ENCODE measurements at regions of chr14 and their contacts with region 1.

Region 1: DNA sequence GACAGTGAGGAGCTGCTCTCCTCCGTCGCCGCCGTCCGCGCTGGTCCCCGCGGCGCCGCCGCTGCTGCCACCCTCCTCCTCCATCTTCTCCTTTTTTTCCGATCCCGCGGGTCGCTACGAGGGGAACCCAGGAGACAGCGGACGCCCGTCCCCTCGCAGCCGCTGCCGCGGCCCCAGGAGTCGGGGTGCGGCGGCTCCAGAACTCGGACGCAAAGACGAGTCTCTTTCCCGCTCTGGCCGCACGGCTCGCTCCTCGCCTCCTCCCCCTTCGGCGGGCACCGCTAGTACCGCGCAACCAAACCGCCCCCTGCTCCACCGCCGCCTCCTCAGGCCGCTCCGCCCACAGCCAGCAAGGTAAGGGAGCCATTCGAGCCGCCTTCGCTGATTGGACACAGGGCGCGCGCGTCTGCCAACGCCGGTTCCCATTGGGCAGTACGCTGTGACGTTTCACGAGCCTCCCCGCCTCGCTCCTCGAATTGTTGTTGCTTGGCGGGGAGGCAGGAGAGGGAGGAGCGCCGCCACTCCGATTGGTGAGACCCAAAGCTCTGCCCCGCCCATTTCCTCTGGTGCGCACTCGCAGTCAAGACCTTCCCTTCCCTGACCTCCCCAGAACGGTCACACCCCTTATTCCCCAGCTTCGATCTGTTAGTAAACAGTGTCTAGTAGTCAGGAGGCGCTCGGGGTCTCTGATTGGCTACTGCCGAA is at the start of gene RPS6KA5:
- DNase-seq: peak; percentile 100
- ATAC-seq: peak; percentile 97 to 98 (median 98)
- H3K4me3 ChIP-seq: peak within 1 kb of the TSS; percentile 68 to 98 (median 94)
- H3K27ac ChIP-seq: peak within 1 kb of the TSS; percentile 84 to 99 (median 95)
- H3K4me1 ChIP-seq: peaks cover 0 to 32% (median 6%) of the 10 kb centered on the region in 12 donors
- H3K27me3 ChIP-seq: no peaks in the 10 kb centered on the region
- CTCF ChIP-seq: peak in 7 of 12 donors; percentile 3 to 37 (median 24)
- POLR2A ChIP-seq: peak in 1 of 2 donors; percentile 84
- total RNA-seq, gene RPS6KA5: 6.5 to 13.3 (median 8.7) TPM

Region 2: DNA sequence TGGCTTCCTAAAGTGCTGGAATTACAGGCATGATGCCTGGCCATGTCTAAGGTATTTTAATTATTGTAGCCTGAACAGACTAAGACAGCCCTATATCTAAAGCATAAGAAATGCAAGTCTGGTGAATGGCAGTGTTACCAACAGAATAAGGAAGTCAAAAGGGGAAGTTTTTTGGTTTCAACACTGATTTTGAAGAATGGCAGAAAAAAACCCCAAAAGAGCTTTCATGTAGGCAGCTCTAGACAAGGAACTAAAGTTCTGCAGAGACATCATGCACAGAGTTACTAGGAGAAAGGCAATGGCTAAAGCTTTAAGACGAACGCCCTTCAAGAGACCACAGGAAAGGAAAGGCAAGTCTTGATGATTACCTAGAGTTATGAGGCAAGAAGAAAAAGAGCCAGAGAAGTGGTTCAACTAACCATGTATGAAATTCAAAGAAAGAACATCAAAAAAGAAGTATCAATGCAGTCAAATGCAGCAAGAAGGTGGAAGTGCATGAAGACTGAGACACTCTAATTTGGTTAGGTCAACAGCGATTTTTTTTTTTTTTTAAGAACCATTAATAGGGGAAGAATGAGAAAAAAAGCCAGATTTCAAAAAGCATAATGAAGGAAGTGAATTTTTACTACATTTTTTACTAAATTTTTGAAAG is 50.9 kb before region 1 on chr14:
- intact Hi-C with region 1: no loop called
- DNase-seq: no peak
- ATAC-seq: peak in 3 of 4 donors; percentile 55 to 64 (median 61)
- H3K4me3 ChIP-seq: no peak overlapping the region
- H3K27ac ChIP-seq: peak overlapping the region in 2 of 12 donors; percentile 7 to 86
- H3K4me1 ChIP-seq: peaks cover 0 to 62% (median 0%) of the 10 kb centered on the region in 12 donors
- H3K27me3 ChIP-seq: no peaks in the 10 kb centered on the region
- CTCF ChIP-seq: no peak
- POLR2A ChIP-seq: no peak

Region 3: GRCh38 chr14:91164685-91165084 is 104.2 kb after region 1 on chr14:
- intact Hi-C with region 1: loop called in 1 of 10 experiments (anchors 5 kb)
- DNase-seq: peak in 4 of 5 donors; percentile 48 to 84 (median 72)
- ATAC-seq: peak; percentile 72 to 82 (median 80)
- H3K4me3 ChIP-seq: no peak overlapping the region
- H3K27ac ChIP-seq: peak overlapping the region in 9 of 12 donors; percentile 1 to 77 (median 53)
- H3K4me1 ChIP-seq: peaks cover 0 to 52% (median 11%) of the 10 kb centered on the region in 12 donors
- H3K27me3 ChIP-seq: no peaks in the 10 kb centered on the region
- CTCF ChIP-seq: no peak
- POLR2A ChIP-seq: no peak

Region 4: GRCh38 chr14:91170504-91171121 is 110.1 kb after region 1 on chr14:
- intact Hi-C with region 1: loop called (anchors 1 to 10 kb)
- DNase-seq: peak in 3 of 5 donors; percentile 23 to 61 (median 58)
- ATAC-seq: peak; percentile 20 to 44 (median 30)
- H3K4me3 ChIP-seq: no peak overlapping the region
- H3K27ac ChIP-seq: peak overlapping the region; percentile 22 to 79 (median 60)
- H3K4me1 ChIP-seq: peaks cover 0 to 55% (median 19%) of the 10 kb centered on the region in 12 donors
- H3K27me3 ChIP-seq: no peaks in the 10 kb centered on the region
- CTCF ChIP-seq: no peak
- POLR2A ChIP-seq: no peak

Region 5: GRCh38 chr14:91177073-91178034 is 116.9 kb after region 1 on chr14:
- intact Hi-C with region 1: loop called in 7 of 10 experiments (anchors 1 to 10 kb)
- DNase-seq: peak in 4 of 5 donors; percentile 32 to 49 (median 46)
- ATAC-seq: peak; percentile 31 to 67 (median 50)
- H3K4me3 ChIP-seq: no peak overlapping the region
- H3K27ac ChIP-seq: peak overlapping the region in 3 of 12 donors; percentile 12 to 37 (median 26)
- H3K4me1 ChIP-seq: peaks cover 0 to 14% (median 6%) of the 10 kb centered on the region in 12 donors
- H3K27me3 ChIP-seq: no peaks in the 10 kb centered on the region
- CTCF ChIP-seq: peak; percentile 58 to 80 (median 73)
- POLR2A ChIP-seq: no peak

Region 6: DNA sequence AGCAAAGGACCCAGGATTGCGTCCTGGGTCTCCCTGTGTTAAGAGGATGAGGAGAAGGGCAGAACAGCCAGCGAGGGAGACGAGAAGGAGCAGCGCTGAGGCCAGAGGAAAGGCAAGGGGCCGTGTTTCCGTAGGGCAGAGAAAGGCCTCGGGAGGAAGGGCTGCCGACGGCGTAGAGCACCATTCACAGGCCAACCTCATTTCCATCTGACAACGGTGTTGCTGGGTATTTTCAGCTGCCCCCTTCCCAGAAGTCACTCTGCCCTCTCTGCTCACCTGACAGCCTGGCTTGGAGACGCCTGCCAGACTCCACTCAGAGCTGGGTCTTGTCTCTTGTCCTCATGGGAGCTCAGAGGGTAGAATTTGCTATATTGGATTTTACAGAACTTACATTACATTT is 132.6 kb after region 1 on chr14:
- intact Hi-C with region 1: no loop called
- DNase-seq: no peak
- ATAC-seq: peak in 3 of 4 donors; percentile 58 to 68 (median 61)
- H3K4me3 ChIP-seq: no peak overlapping the region
- H3K27ac ChIP-seq: no peak overlapping the region
- H3K4me1 ChIP-seq: peaks cover 0 to 4% (median 0%) of the 10 kb centered on the region in 12 donors
- H3K27me3 ChIP-seq: no peaks in the 10 kb centered on the region
- CTCF ChIP-seq: no peak
- POLR2A ChIP-seq: no peak

Measured in heart left ventricle (tissue), 16 donors.